ENCODE measurements at regions of chr13 and their contacts with region 1.

Region 1: GRCh38 chr13:42048682-42049453 is 420 bp downstream of the DGKH start:
- DNase-seq: peak; percentile 85
- ATAC-seq: peak; percentile 91 to 92

Region 2: DNA sequence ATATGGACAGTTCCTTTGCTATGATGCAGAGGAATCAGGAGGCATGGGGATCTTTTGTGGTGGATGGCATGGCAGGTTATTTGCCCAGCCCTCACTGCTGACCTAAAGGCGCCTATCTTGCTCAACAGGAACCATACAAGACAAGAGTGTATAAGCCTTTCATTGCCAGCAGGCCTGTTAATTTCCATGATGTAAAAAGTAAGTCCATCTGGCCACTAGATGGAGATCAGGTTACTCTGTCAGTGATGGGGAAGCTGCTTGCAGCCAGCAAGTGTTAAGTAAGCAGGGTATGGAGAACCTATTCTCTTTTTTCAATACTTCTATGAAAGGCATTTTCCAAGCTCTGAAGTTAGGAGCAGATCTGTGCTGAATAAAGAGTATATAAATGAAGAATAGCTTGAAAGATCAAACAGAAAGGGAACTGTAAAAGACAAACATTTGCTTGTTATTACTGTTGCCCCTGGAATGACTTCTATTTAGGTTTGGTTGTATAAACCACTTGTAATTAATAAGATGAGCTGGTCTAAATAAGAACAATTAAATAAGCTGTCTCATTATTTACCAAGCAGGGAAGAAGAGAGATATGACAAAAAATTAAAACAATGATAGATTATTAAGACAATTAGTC is 380.6 kb before region 1 on chr13:
- intact Hi-C with region 1: loop called in 1 of 2 experiments (anchors 5 kb)
- DNase-seq: peak; percentile 31
- ATAC-seq: peak; percentile 96 to 97

Region 3: GRCh38 chr13:42266473-42266872 is 217.6 kb after region 1 on chr13:
- intact Hi-C with region 1: no loop called
- DNase-seq: no peak
- ATAC-seq: peak in 1 of 2 donors; percentile 50

Region 4: DNA sequence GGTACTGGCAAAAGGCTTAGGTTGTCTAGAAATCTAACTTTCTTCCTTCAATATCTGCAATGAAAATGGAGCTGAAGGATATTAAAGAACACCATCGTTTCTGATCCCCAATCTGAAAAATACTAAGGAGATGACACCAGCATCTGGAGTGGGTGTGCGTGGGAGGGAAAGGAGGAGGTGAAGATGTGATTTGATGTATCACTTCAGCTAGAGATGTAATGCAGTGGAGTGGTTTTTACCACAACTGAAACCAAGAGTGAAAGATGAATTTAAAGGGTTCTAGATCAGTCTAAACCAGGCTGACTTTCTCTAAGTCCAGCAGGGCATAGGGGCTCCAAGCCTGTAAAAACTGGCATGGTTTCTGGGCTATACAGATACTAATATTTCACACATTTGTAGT is 371.4 kb after region 1 on chr13:
- intact Hi-C with region 1: no loop called
- DNase-seq: no peak
- ATAC-seq: no peak